CD4-positive, alpha-beta memory T cell (primary cell): ENCODE measurements at regions of chr16 and their contacts with region 1.

Region 1: DNA sequence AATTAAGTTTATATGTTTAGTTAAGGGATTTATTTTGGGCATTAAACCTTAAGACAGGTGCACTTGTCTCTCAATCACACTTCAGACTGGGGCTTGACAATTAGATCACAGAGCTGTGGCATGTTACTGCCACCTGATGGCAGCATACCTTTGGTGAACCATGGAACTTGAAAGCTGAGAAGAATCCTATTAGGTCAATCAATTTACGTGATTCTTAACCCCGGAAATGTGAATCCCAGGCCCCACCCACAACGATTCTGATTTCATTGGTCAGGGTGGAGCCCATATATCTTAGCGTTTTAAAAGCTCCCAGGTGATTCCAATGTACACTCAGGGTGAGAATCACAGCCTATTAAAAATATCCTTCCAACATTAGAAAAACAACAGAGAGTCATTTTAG is 91.0 kb downstream of the GSG1L start:
- DNase-seq: peak; percentile 39 to 55 (median 43)
- H3K4me3 ChIP-seq: no peak overlapping the region
- H3K4me3 Mint-ChIP-seq: peak overlapping the region in 1 of 8 donors; percentile 26
- H3K27ac ChIP-seq: no peak overlapping the region
- H3K27ac Mint-ChIP-seq: peak overlapping the region in 1 of 7 donors; percentile 66
- H3K4me1 ChIP-seq: no peaks in the 10 kb centered on the region
- H3K4me1 Mint-ChIP-seq: peaks cover 0 to 5% (median 2%) of the 10 kb centered on the region in 4 donors
- H3K27me3 ChIP-seq: no peaks in the 10 kb centered on the region
- H3K27me3 Mint-ChIP-seq: peaks cover 10 to 15% of the 10 kb centered on the region in 2 donors

Region 2: GRCh38 chr16:27945233-27945973 is 27.1 kb before region 1 on chr16:
- CTCF ChIA-PET with region 1: no interaction called
- POLR2A ChIA-PET with region 1: no interaction called
- intact Hi-C with region 1: no loop called
- DNase-seq: no peak
- H3K4me3 ChIP-seq: no peak overlapping the region
- H3K4me3 Mint-ChIP-seq: no peak overlapping the region
- H3K27ac ChIP-seq: no peak overlapping the region
- H3K27ac Mint-ChIP-seq: no peak overlapping the region
- H3K4me1 ChIP-seq: no peaks in the 10 kb centered on the region
- H3K4me1 Mint-ChIP-seq: no peaks in the 10 kb centered on the region
- H3K27me3 ChIP-seq: no peaks in the 10 kb centered on the region
- H3K27me3 Mint-ChIP-seq: peaks cover 12 to 22% of the 10 kb centered on the region in 2 donors

Region 3: DNA sequence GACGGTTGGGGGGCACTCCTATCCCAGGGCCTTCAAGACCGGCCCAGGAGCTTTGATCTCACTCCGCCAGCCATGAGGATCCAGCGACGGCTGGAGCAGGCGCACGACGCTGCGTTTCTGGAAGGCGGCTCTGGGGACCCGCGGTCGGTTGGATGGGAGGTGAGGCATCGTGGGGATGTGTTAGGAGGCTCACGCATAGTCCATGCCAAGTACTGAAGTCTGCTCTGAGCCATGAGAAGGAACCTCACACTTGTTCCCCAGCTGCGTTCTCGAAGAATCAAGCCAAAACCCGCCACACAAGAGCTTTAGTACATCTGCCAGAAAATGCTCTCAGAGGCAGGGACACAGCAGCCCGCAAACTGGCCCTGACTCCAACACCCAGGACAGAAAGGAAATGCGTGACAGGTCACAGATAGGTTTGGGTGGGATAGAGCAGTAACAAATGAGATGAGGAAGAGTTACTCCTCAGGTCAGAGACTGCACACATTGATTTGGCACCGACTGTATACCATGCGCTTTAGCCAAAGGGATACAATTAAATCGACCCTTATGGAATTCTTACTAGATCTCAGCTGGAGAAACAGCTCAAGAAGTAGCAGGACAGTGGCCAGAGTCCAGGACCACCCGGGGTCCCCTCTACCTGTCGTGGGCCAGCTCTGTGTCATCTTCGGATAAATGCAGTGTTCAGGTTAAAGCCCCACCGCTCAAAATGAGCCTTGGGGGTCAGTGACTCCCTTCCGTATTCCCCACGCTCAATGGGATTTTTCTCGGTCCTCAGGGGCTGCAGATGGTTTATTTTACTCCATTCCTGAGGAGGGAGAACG is 97.7 kb after region 1 on chr16:
- CTCF ChIA-PET with region 1: interaction called, 21 read pairs
- POLR2A ChIA-PET with region 1: interaction called, 5 read pairs
- intact Hi-C with region 1: loop called (anchors 1 kb)
- DNase-seq: no peak
- H3K4me3 ChIP-seq: no peak overlapping the region
- H3K4me3 Mint-ChIP-seq: no peak overlapping the region
- H3K27ac ChIP-seq: no peak overlapping the region
- H3K27ac Mint-ChIP-seq: no peak overlapping the region
- H3K4me1 ChIP-seq: no peaks in the 10 kb centered on the region
- H3K4me1 Mint-ChIP-seq: peaks cover 0 to 2% (median under 1%) of the 10 kb centered on the region in 4 donors
- H3K27me3 ChIP-seq: no peaks in the 10 kb centered on the region
- H3K27me3 Mint-ChIP-seq: peaks cover 4% of the 10 kb centered on the region in 2 donors